Dendritic cell treated with granulocyte-macrophage colony-stimulating factor and Interleukin-4, amounts not matched to agents 40 ng/mL and 50 ng/mL, for 4 days (primary cell): ENCODE measurements at regions of chr13 and their contacts with region 1.

Region 1: GRCh38 chr13:52947921-52948373 is 80.7 kb upstream of the OLFM4 start:
- H3K4me3 Mint-ChIP-seq: peak overlapping the region; percentile 28
- H3K27ac Mint-ChIP-seq: peak overlapping the region; percentile 64
- H3K4me1 Mint-ChIP-seq: peaks cover 50% of the 10 kb centered on the region
- H3K27me3 Mint-ChIP-seq: no peaks in the 10 kb centered on the region

Region 2: DNA sequence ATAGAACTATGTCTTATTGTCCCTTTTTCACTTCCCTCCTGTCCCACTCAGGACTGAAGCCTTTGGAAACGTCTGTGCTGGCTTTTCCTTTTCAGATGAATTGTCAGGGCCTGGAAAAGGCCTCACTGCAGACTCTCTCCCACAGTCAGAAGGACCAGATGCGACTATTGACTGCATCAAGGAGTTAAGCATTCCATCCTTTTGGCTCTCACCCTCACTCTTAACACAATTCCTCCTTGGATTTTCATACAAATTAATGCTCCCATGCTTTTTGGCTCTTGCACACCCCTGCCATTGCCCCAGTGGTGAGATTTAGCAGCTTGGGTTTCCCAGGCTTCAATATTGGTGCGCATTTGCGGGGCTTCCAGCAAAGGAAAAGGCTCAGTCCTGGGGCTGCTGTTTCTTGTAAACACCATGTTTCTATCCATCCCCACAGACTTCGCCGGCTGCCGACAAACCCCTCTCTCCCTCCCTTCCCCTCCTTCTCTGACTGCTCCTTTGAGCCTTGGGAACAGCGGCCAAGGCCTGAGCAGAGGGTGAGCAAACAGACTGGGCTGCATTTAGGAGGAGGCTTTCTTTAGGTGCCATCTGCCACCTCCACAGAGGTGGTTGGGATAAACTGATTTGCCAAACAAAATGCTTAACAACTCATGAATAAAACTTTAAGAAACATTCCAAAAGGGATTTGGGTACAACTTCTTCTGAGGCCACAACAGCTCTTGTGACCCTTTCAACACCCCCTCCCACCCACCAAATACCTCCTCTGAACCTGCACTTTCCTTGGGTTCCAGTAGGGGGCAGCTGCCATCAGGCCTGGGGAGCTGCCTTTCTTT is 50.9 kb before region 1 on chr13:
- intact Hi-C with region 1: no loop called
- H3K4me3 Mint-ChIP-seq: no peak overlapping the region
- H3K27ac Mint-ChIP-seq: no peak overlapping the region
- H3K4me1 Mint-ChIP-seq: no peaks in the 10 kb centered on the region
- H3K27me3 Mint-ChIP-seq: peaks cover 13% of the 10 kb centered on the region

Region 3: GRCh38 chr13:52911340-52911739 is 36.6 kb before region 1 on chr13:
- intact Hi-C with region 1: loop called (anchors 5 kb)
- H3K4me3 Mint-ChIP-seq: no peak overlapping the region
- H3K27ac Mint-ChIP-seq: no peak overlapping the region
- H3K4me1 Mint-ChIP-seq: peaks cover 16% of the 10 kb centered on the region
- H3K27me3 Mint-ChIP-seq: peaks cover 26% of the 10 kb centered on the region

Region 4: DNA sequence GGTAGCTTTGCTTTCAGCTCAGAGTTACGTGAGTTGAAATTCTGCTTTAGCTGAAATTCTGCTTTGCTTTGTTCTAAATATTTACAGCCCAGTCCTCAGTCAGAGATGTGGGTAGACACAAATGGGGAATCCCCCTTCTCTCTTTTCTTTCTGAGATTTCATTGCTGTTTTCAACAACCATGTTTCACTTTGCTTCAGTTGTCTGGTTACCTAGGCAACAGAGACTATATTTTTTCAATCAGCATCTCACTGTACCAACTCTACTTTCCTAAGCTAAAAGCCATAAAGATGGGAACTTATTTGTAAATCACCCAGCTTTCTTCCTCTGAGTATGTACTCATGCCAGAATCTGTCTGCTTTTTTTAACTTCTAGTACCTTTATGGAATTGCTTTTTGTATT is 589.6 kb after region 1 on chr13:
- intact Hi-C with region 1: no loop called
- H3K4me3 Mint-ChIP-seq: no peak overlapping the region
- H3K27ac Mint-ChIP-seq: no peak overlapping the region
- H3K4me1 Mint-ChIP-seq: no peaks in the 10 kb centered on the region
- H3K27me3 Mint-ChIP-seq: no peaks in the 10 kb centered on the region